Colonic mucosa (tissue), 4 donors: ENCODE measurements at regions of chr1 and their contacts with region 1.

Region 1: DNA sequence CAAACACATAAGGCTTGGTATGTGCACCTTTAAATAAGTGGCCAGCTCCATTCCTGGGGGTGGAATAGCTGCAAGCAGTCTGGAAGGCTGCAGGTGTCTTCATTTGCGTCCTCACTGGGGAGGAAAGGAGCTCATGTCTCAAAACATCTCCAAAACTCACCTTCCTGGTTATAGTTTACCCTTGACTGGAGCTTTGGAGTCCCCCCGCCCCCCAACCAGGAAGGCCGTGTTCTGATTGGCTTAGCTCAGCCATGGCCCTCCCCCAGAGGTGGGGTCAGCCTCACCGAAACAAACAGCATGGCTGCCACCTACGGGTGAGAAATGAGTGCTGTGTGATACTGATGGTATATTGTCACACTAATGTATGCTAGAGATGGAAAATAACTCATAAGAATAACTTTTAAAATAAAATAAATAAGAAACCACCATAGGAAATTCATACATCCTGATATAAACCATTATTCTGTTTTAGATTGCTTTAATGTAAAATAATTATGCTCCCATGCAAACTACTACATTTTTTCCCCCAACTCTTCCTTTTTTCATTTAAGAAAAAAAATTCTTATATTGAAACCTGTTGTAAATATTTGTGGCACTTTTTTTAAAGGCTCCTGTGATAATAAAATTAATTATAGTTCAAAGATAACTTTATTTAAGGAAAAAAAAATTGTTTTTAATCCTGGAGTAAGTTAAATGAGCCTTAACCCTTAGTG is 90.8 kb downstream of the ZP4 start:
- DNase-seq: peak; percentile 83
- H3K4me3 ChIP-seq: no peak overlapping the region
- H3K27ac ChIP-seq: no peak overlapping the region
- H3K4me1 ChIP-seq: no peaks in the 10 kb centered on the region
- H3K27me3 ChIP-seq: no peaks in the 10 kb centered on the region
- CTCF ChIP-seq: peak; percentile 21

Region 2: DNA sequence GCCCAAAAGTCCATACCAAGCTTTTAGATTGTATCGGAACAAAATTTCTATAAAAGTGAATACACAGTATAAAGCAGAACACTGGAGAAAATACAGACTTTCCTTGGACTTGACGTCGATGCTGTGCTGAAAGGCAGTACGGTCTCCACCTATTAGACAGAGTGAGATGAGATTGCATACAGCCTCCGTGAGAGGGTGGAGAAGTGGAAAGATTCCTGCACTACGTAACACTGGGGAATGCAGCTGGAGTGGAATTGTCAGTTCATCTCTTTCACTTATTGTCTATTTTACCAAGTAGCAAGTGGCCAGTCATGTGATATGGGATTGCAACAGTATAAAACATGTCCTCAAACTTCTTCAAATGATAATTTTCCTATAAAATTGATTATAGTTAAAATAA is 118.7 kb before region 1 on chr1:
- intact Hi-C with region 1: loop called (anchors 2 kb)
- DNase-seq: no peak
- H3K4me3 ChIP-seq: no peak overlapping the region
- H3K27ac ChIP-seq: no peak overlapping the region
- H3K4me1 ChIP-seq: no peaks in the 10 kb centered on the region
- H3K27me3 ChIP-seq: no peaks in the 10 kb centered on the region
- CTCF ChIP-seq: no peak

Region 3: DNA sequence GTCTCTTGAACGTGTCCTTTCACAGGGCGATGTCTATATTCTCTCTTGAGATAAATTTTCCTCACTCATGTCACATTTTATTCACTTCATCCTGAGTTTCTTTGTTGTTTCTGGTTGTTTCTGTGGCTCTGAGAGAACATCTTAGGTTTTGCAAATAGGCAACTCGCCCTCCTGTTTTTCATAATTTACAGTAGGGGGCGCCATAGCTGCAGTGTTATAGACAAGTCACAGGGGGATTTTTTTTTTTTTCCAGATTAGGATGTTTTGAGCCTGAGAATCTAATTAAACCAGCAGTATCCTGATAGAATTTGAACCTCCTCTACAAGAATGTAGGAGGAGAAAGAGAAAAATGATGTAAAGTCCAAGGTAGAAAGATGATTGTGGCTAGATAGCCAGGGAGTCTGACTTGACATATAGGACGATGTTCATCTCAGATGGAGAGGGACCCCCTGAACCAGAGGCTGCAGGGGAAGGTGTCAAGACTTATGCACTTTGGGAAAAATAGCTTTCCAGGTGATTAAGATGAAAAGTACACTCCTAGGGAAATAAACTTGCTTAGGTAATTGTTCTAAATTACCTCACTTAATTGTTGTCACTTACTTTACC is 14.5 kb after region 1 on chr1:
- intact Hi-C with region 1: no loop called
- DNase-seq: no peak
- H3K4me3 ChIP-seq: no peak overlapping the region
- H3K27ac ChIP-seq: no peak overlapping the region
- H3K4me1 ChIP-seq: no peaks in the 10 kb centered on the region
- H3K27me3 ChIP-seq: no peaks in the 10 kb centered on the region
- CTCF ChIP-seq: peak; percentile 46

Region 4: GRCh38 chr1:237976331-237976730 is 176.4 kb after region 1 on chr1:
- intact Hi-C with region 1: no loop called
- DNase-seq: no peak
- H3K4me3 ChIP-seq: no peak overlapping the region
- H3K27ac ChIP-seq: no peak overlapping the region
- H3K4me1 ChIP-seq: no peaks in the 10 kb centered on the region
- H3K27me3 ChIP-seq: no peaks in the 10 kb centered on the region
- CTCF ChIP-seq: no peak